ENCODE measurements at regions of chr2 and their contacts with region 1.

Region 1: GRCh38 chr2:42828487-42829425 is 36.4 kb upstream of the HAAO start:
- DNase-seq: peak; percentile 72
- H3K4me3 ChIP-seq: no peak overlapping the region
- H3K27ac ChIP-seq: no peak overlapping the region
- H3K4me1 ChIP-seq: peaks cover 25% of the 10 kb centered on the region
- H3K27me3 ChIP-seq: no peaks in the 10 kb centered on the region
- CTCF ChIP-seq: peak; percentile 95

Region 2: DNA sequence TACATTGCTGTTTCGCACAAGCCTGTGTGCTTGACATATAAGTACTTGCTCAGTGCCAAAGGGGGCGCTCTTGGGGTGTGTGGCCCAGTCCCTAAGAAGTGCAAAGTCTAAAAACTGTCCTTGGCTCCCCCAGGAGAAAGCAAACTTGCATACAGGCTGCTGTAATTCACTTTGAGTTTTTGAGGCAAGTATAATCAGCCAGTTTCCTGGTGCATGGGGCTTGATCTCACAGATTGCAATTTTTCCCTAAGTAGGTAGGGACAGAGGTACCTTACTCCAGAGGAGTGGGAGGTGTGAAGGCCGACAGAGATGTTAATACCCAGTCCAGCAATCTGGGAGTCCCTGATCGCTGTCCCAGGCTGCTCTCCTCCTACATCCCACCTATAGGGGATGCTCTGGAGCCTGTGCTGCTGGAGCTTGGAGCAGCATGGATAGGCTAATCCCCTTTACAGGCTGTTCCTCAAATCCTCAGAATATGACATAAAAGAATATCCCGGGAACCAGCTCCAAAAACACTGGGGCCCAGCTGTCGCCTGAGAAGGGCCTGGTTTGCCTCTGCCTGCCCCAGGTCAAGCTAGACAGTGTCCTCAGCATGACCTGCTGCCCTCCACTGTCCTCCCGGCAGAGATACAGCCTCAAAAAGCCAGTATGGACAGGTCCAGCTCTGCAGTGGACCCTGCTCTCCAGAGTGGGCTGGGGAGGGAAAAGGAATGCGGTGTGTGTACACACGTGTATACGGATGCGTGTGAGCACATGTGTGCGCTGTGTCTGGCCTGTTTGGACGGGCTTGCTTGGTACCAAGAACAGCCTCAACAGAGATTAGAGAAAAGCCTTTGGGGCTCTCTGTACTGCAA is 100.2 kb after region 1 on chr2:
- CTCF ChIA-PET with region 1: no interaction called
- POLR2A ChIA-PET with region 1: no interaction called
- intact Hi-C with region 1: loop called (anchors 5 kb)
- DNase-seq: peak; percentile 42
- H3K4me3 ChIP-seq: no peak overlapping the region
- H3K27ac ChIP-seq: no peak overlapping the region
- H3K4me1 ChIP-seq: peaks cover 28% of the 10 kb centered on the region
- H3K27me3 ChIP-seq: no peaks in the 10 kb centered on the region
- CTCF ChIP-seq: peak; percentile 49

Region 3: GRCh38 chr2:42944779-42945415 is 116.1 kb after region 1 on chr2:
- CTCF ChIA-PET with region 1: no interaction called
- POLR2A ChIA-PET with region 1: no interaction called
- intact Hi-C with region 1: loop called (anchors 5 kb)
- DNase-seq: peak; percentile 39
- H3K4me3 ChIP-seq: no peak overlapping the region
- H3K27ac ChIP-seq: no peak overlapping the region
- H3K4me1 ChIP-seq: no peaks in the 10 kb centered on the region
- H3K27me3 ChIP-seq: no peaks in the 10 kb centered on the region
- CTCF ChIP-seq: no peak

Region 4: GRCh38 chr2:43542285-43542937 is 713.7 kb after region 1 on chr2:
- CTCF ChIA-PET with region 1: no interaction called
- POLR2A ChIA-PET with region 1: no interaction called
- intact Hi-C with region 1: loop called (anchors 1 kb)
- DNase-seq: peak; percentile 63
- H3K4me3 ChIP-seq: no peak overlapping the region
- H3K27ac ChIP-seq: no peak overlapping the region
- H3K4me1 ChIP-seq: no peaks in the 10 kb centered on the region
- H3K27me3 ChIP-seq: no peaks in the 10 kb centered on the region
- CTCF ChIP-seq: peak; percentile 67

Region 5: DNA sequence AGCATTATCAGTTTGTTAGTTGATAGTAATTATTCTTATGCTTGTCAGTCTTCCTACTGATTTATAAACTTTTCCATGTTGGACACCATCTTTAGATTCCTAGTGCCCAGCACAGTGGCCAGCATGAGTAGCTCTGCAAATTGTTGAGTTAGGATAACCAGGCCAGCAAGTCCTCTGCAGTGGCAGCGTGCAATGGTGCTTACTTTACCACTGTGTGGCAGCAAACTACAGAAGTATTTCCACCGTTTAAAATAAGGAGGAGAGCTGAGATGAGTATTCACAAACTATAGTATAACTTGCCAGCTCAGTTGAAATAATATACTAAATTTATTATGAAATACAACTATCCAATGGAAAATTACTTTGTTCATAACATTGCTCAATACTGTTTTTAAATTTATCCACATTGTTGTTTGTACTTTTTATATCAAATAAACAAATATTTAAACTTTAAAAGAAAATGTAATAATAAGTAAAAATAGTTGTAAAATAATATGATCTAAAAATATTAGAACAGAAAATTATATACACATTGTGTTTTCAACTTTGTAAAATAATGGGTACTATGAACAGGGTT is 776.4 kb after region 1 on chr2:
- CTCF ChIA-PET with region 1: no interaction called
- POLR2A ChIA-PET with region 1: no interaction called
- intact Hi-C with region 1: loop called (anchors 2 kb)
- DNase-seq: peak; percentile 61
- H3K4me3 ChIP-seq: no peak overlapping the region
- H3K27ac ChIP-seq: no peak overlapping the region
- H3K4me1 ChIP-seq: no peaks in the 10 kb centered on the region
- H3K27me3 ChIP-seq: no peaks in the 10 kb centered on the region
- CTCF ChIP-seq: peak; percentile 68